ENCODE measurements at regions of chr17 and their contacts with region 1.

Region 1: GRCh38 chr17:47066841-47067682 is 88.0 kb upstream of the RPRML start:
- DNase-seq: peak; percentile 58 to 93 (median 78)
- ATAC-seq: peak; percentile 100
- H3K4me3 ChIP-seq: peak overlapping the region; percentile 76 to 93
- H3K4me3 Mint-ChIP-seq: peak overlapping the region; percentile 94
- H3K27ac ChIP-seq: peak overlapping the region; percentile 61 to 96
- H3K27ac Mint-ChIP-seq: peak overlapping the region; percentile 98
- H3K4me1 ChIP-seq: peaks cover 9% of the 10 kb centered on the region
- H3K4me1 Mint-ChIP-seq: peaks cover 32% of the 10 kb centered on the region
- H3K27me3 ChIP-seq: no peaks in the 10 kb centered on the region
- H3K27me3 Mint-ChIP-seq: no peaks in the 10 kb centered on the region
- CTCF ChIP-seq: no peak

Region 2: DNA sequence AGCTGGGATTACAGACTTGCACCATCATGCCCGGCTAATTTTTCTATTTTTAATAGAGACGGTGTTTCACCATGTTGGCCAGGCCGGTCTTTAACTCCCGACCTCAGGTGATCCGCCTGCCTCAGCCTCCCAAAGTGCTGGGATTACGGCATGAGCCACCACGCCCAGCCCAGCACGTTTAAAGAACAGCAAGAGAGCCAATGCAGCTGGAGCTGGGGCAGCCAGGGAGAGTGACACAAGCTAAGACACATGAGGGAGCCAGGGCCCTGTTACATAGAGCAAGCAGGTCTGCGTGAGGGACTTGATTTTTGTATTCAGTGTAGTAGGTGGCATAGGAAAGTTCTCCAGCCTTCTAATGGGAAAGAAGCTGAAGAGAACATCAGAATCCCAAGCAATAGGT is 165.8 kb before region 1 on chr17:
- CTCF ChIA-PET with region 1: no interaction called
- POLR2A ChIA-PET with region 1: no interaction called
- intact Hi-C with region 1: no loop called
- DNase-seq: no peak
- ATAC-seq: no peak
- H3K4me3 ChIP-seq: no peak overlapping the region
- H3K4me3 Mint-ChIP-seq: no peak overlapping the region
- H3K27ac ChIP-seq: no peak overlapping the region
- H3K27ac Mint-ChIP-seq: no peak overlapping the region
- H3K4me1 ChIP-seq: no peaks in the 10 kb centered on the region
- H3K4me1 Mint-ChIP-seq: peaks cover 4% of the 10 kb centered on the region
- H3K27me3 ChIP-seq: peaks cover 0 to 3% of the 10 kb centered on the region in 2 experiments
- H3K27me3 Mint-ChIP-seq: peaks cover 16% of the 10 kb centered on the region
- CTCF ChIP-seq: no peak

Region 3: DNA sequence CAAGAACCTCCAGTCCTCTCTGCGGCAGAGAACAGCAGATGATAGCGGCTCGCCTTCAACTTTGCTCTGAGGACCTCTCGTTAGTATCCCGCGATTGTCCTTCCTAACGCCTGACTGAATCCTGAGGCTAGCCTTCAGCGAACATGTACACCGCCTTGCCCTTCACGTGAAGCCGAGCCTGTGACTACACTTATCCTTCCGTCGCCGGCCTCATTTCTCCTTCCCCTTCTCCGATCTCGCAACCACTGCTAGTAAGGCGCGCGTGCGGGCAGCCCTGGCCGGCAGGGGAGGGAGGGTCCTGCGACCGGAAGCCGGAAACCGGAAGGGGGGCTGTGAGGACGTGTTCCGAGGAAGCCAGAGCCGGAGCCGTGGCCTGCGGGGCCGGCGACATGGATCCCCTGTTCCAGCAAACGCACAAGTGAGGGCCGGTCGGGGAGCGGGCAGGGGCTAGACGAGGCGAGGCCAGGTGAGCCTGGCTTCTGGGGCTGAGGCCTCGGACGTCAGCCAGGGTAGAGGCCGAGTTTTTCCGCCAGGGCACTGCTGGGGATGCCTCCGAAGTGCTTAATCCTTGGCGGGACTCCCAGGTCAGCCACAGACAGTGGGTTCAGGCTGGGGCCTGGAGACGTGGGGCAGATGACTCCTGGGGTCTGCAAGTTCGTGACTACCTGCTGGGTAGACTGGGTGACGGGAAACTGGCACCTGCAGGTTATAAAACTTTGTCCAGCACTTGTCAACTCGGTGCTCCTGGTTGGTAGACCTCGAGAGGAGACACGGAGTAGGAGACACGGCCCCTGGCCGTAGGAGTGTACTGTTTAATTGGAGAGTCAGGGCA is 144.0 kb before region 1 on chr17 and contains the start of gene GOSR2:
- CTCF ChIA-PET with region 1: no interaction called
- POLR2A ChIA-PET with region 1: no interaction called
- intact Hi-C with region 1: loop called (anchors 1 to 2 kb)
- DNase-seq: peak; percentile 84 to 96 (median 88)
- ATAC-seq: peak; percentile 91
- H3K4me3 ChIP-seq: peak within 1 kb of the TSS; percentile 75 to 92
- H3K4me3 Mint-ChIP-seq: peak within 1 kb of the TSS; percentile 95
- H3K27ac ChIP-seq: peak within 1 kb of the TSS; percentile 86 to 91
- H3K27ac Mint-ChIP-seq: peak within 1 kb of the TSS; percentile 100
- H3K4me1 ChIP-seq: peaks cover 26% of the 10 kb centered on the region
- H3K4me1 Mint-ChIP-seq: peaks cover 59% of the 10 kb centered on the region
- H3K27me3 ChIP-seq: no peaks in the 10 kb centered on the region
- H3K27me3 Mint-ChIP-seq: no peaks in the 10 kb centered on the region
- CTCF ChIP-seq: no peak
- total RNA-seq, gene GOSR2: 45.5 to 47.3 TPM

Region 4: GRCh38 chr17:47099987-47100711 is 33.1 kb after region 1 on chr17:
- CTCF ChIA-PET with region 1: no interaction called
- POLR2A ChIA-PET with region 1: no interaction called
- intact Hi-C with region 1: loop called (anchors 1 kb)
- DNase-seq: peak; percentile 79 to 93 (median 89)
- ATAC-seq: peak; percentile 99
- H3K4me3 ChIP-seq: peak overlapping the region; percentile 51 to 82
- H3K4me3 Mint-ChIP-seq: peak overlapping the region; percentile 100
- H3K27ac ChIP-seq: peak overlapping the region; percentile 35 to 49
- H3K27ac Mint-ChIP-seq: peak overlapping the region; percentile 99
- H3K4me1 ChIP-seq: peaks cover 8% of the 10 kb centered on the region
- H3K4me1 Mint-ChIP-seq: peaks cover 30% of the 10 kb centered on the region
- H3K27me3 ChIP-seq: no peaks in the 10 kb centered on the region
- H3K27me3 Mint-ChIP-seq: no peaks in the 10 kb centered on the region
- CTCF ChIP-seq: no peak

Region 5: GRCh38 chr17:47323382-47324222 is 256.5 kb after region 1 on chr17 and contains the start of gene EFCAB13:
- CTCF ChIA-PET with region 1: no interaction called
- POLR2A ChIA-PET with region 1: no interaction called
- intact Hi-C with region 1: loop called in 1 of 2 experiments (anchors 10 kb)
- DNase-seq: peak; percentile 55 to 92 (median 79)
- ATAC-seq: peak; percentile 69
- H3K4me3 ChIP-seq: peak within 1 kb of the TSS; percentile 86 to 91
- H3K4me3 Mint-ChIP-seq: peak within 1 kb of the TSS; percentile 99
- H3K27ac ChIP-seq: peak within 1 kb of the TSS; percentile 80 to 84
- H3K27ac Mint-ChIP-seq: peak within 1 kb of the TSS; percentile 95
- H3K4me1 ChIP-seq: peaks cover 4% of the 10 kb centered on the region
- H3K4me1 Mint-ChIP-seq: peaks cover 20% of the 10 kb centered on the region
- H3K27me3 ChIP-seq: no peaks in the 10 kb centered on the region
- H3K27me3 Mint-ChIP-seq: no peaks in the 10 kb centered on the region
- CTCF ChIP-seq: peak; percentile 12
- total RNA-seq, gene EFCAB13: 10.7 to 13.1 TPM

Region 6: DNA sequence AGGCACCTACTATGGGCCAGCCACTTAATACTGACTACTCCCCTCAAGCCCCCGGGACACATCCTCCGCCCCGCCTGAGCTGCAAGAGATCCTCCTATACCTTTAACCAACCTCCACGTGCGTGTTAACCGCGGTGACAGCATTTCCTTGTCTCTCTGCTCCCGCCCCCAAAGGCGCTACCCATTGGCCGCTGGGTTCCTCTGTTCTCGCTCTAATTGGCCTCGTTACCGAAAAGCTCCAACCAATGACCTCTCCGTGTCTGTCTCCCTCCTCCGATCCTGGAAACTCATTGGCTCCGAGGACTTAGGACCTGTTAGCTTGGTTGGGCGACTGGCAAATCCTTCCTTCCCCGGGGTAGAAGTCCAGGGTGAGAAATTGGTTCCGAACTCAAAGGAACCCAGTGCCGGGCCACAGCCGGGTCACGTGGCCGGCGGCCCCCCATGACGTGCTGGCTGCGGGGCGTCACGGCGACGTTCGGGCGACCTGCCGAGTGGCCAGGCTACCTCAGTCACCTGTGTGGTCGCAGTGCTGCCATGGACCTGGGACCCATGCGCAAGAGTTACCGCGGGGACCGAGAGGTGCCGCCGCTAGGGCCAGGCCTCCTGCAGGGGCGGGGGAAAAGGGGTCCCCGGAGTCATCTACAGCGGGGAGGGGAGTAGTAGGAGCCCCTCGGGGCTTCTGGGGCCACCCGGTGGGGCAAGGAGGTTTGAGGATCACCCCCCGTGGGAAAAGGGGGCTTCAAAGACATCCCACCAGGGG is 874.4 kb after region 1 on chr17 and contains the start of gene PNPO:
- CTCF ChIA-PET with region 1: no interaction called
- POLR2A ChIA-PET with region 1: no interaction called
- intact Hi-C with region 1: loop called in 1 of 2 experiments (anchors 5 kb)
- DNase-seq: peak; percentile 82 to 98 (median 92)
- ATAC-seq: peak; percentile 97
- H3K4me3 ChIP-seq: peak within 1 kb of the TSS; percentile 72 to 92
- H3K4me3 Mint-ChIP-seq: peak within 1 kb of the TSS; percentile 86
- H3K27ac ChIP-seq: peak within 1 kb of the TSS; percentile 57 to 88
- H3K27ac Mint-ChIP-seq: peak within 1 kb of the TSS; percentile 87
- H3K4me1 ChIP-seq: peaks cover 47% of the 10 kb centered on the region
- H3K4me1 Mint-ChIP-seq: peaks cover 54% of the 10 kb centered on the region
- H3K27me3 ChIP-seq: no peaks in the 10 kb centered on the region
- H3K27me3 Mint-ChIP-seq: no peaks in the 10 kb centered on the region
- CTCF ChIP-seq: no peak
- total RNA-seq, gene PNPO: 5.7 to 5.8 TPM

Measured in CD8-positive, alpha-beta T cell (primary cell).